ENCODE measurements at regions of chr3 and their contacts with region 1.

Region 1: GRCh38 chr3:40971191-40972168 is 227.8 kb upstream of the CTNNB1 start:
- DNase-seq: peak; percentile 77
- H3K4me3 Mint-ChIP-seq: peak overlapping the region; percentile 77
- H3K27ac Mint-ChIP-seq: peak overlapping the region; percentile 98
- H3K4me1 Mint-ChIP-seq: peaks cover 53% of the 10 kb centered on the region
- H3K27me3 Mint-ChIP-seq: no peaks in the 10 kb centered on the region

Region 2: GRCh38 chr3:41188268-41188667 is 216.8 kb after region 1 on chr3:
- intact Hi-C with region 1: loop called (anchors 1 kb)
- DNase-seq: peak; percentile 59
- H3K4me3 Mint-ChIP-seq: no peak overlapping the region
- H3K27ac Mint-ChIP-seq: peak overlapping the region; percentile 69
- H3K4me1 Mint-ChIP-seq: peaks cover 23% of the 10 kb centered on the region
- H3K27me3 Mint-ChIP-seq: peaks cover 15% of the 10 kb centered on the region

Measured in activated CD4-positive, alpha-beta T cell treated with anti-CD3 and anti-CD28 coated beads, Interleukin-2, amount 10 ng/mL, durations not matched to agents 24 days and 14 days (primary cell).